GM10248 (cell line): ENCODE measurements at regions of chr15 and their contacts with region 1.

Region 1: DNA sequence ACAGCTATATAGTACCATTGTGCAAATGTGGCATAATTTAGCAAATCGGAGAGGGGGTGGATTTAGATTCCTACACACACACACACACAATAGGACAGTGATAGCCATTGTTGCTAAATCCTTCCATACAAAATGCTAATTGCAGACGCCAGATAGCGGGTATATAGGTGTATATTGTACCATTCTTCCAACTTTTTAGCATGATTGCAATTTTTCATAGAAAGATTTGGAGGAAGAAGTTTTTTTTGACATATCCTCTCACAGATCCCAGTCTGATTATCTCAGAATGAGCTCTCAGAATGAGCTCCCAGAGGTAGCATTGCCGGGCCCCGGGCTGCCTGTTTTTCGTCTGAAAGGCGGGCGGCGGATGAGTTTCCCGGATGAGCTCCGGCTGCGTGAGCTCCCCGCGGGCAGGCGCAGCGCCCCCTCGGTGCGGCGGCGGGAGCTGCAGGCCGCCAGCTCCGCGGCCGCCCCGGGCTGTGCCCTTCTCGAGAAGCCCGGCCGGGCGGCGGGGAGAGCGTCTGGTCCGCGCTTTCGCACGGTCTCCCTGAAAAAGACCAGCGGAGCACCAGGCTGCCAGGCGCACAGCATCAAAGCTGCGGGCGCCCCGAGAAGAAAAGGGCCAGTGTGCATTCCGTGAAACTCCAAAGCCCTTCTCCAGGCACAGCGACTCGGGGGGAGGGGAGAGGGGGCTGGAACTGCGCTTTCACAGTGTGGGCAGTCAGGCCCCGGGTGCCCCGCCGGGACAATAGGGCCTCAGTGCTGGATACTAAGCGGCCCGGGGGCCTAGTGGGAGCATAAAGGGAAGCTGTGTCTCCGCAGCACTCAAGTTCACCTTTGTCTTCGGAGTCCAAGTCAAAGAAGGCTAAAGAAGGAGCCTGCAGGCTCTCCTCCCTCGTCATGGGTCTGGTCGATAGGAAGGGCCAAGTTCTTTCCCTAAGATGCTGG is 12.0 kb upstream of the SHC4 start:
- DNase-seq: peak; percentile 88
- CTCF ChIP-seq: peak; percentile 86

Region 2: DNA sequence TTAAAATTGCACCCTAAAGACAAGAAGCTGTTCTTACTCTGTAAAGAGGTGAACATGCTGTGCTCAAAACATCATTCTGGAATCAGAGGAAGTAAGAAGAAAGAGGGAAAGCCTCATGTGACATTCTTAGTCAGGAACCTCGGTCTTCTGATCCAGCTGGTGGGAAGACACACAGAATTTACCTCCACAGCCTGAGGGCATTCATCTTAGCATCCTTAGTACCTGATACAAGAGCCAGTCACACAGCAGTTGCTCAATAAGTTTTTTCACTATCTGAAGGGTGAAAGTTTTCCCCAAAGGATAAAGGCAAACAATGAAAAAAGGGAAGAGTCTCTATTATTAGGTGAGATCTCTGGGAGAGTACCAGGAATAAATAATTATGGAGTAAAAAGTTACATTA is 1141.7 kb before region 1 on chr15:
- CTCF ChIA-PET with region 1: no interaction called
- POLR2A ChIA-PET with region 1: no interaction called
- DNase-seq: no peak
- CTCF ChIP-seq: no peak

Region 3: GRCh38 chr15:48358229-48358641 is 617.5 kb before region 1 on chr15:
- CTCF ChIA-PET with region 1: interaction called, 11 read pairs
- POLR2A ChIA-PET with region 1: no interaction called
- DNase-seq: peak; percentile 35
- CTCF ChIP-seq: peak; percentile 60

Region 4: DNA sequence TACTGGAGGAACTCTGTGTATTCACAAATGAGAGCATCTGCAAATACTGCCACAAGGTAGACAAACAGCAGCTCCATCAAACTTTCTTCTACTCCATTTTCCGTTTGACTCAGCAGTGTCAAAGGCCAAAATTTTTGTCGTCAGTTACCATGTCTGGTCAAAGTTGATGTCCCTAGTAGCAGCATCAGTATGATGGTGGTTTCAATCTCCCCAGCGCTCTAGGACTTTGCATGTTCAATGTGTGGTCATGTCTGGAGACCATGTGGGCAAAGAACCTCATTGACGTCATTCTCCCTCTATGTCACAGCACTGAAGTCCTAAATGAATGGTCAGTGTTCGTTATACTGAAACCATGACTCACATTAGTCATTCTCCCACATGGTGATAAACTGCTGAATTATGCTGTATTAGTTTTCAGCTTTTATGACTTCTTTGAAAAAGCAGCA is 35.3 kb before region 1 on chr15:
- CTCF ChIA-PET with region 1: interaction called, 13 read pairs
- POLR2A ChIA-PET with region 1: no interaction called
- DNase-seq: peak; percentile 58
- CTCF ChIP-seq: no peak

Region 5: DNA sequence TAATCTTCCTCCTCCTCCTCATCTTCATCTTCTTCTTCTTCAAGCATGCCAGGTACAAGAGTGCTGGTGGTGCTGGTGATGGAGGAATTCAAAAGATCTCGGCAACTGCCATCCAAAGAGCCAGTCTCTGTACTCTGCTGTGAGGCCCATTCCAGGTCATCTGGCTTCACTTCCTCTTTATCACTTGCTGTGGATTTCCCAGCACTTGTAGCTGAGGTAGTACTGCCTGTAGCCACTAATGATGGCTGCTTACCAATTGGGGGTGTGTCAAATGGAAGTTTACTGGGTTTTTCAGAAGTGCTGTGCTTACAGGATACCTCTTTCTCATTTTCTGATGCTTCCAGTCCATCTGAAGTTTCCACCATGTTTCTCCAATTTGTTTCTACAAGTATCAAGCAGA is 16.8 kb after region 1 on chr15:
- CTCF ChIA-PET with region 1: interaction called, 48 read pairs
- POLR2A ChIA-PET with region 1: no interaction called
- DNase-seq: peak; percentile 41
- CTCF ChIP-seq: no peak

Region 6: DNA sequence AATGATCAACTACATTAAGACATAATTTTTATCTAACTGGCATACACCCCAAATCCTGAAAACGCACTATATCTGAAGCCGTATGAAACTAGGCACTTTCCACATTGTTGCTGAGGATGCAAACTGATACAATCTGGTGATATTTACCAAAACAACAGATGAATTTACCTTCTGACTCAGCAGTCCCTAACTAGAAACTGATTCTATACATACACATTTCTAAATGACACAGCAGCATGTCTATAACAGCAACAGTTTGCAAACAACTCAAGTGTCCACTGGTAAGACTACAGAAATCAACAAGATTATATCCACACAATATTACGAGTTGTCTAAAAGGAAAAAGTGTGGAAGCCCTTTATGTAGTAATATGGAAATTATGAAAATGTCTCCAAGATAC is 47.6 kb after region 1 on chr15:
- CTCF ChIA-PET with region 1: interaction called, 13 read pairs
- POLR2A ChIA-PET with region 1: no interaction called
- DNase-seq: peak; percentile 19
- CTCF ChIP-seq: no peak